Natural killer cell (primary cell): ENCODE measurements at regions of chr3 and their contacts with region 1.

Region 1: GRCh38 chr3:32947789-32948238 is 3.6 kb upstream of the CCR4 start:
- DNase-seq: peak; percentile 67 to 93
- ATAC-seq: peak; percentile 78 to 87 (median 82)
- H3K4me3 ChIP-seq: no peak overlapping the region
- H3K4me3 Mint-ChIP-seq: no peak overlapping the region
- H3K27ac ChIP-seq: no peak overlapping the region
- H3K27ac Mint-ChIP-seq: no peak overlapping the region
- H3K4me1 ChIP-seq: peaks cover 8% of the 10 kb centered on the region
- H3K4me1 Mint-ChIP-seq: no peaks in the 10 kb centered on the region
- H3K27me3 ChIP-seq: no peaks in the 10 kb centered on the region
- H3K27me3 Mint-ChIP-seq: no peaks in the 10 kb centered on the region
- CTCF ChIP-seq: peak; percentile 71

Region 2: GRCh38 chr3:33074217-33075067 is 126.6 kb after region 1 on chr3:
- intact Hi-C with region 1: loop called (anchors 1 kb)
- DNase-seq: peak in 1 of 2 donors; percentile 86
- ATAC-seq: peak; percentile 81 to 85 (median 81)
- H3K4me3 ChIP-seq: no peak overlapping the region
- H3K4me3 Mint-ChIP-seq: no peak overlapping the region
- H3K27ac ChIP-seq: no peak overlapping the region
- H3K27ac Mint-ChIP-seq: no peak overlapping the region
- H3K4me1 ChIP-seq: peaks cover 2% of the 10 kb centered on the region
- H3K4me1 Mint-ChIP-seq: peaks cover 8 to 24% of the 10 kb centered on the region in 2 donors
- H3K27me3 ChIP-seq: no peaks in the 10 kb centered on the region
- H3K27me3 Mint-ChIP-seq: no peaks in the 10 kb centered on the region
- CTCF ChIP-seq: peak; percentile 83

Region 3: DNA sequence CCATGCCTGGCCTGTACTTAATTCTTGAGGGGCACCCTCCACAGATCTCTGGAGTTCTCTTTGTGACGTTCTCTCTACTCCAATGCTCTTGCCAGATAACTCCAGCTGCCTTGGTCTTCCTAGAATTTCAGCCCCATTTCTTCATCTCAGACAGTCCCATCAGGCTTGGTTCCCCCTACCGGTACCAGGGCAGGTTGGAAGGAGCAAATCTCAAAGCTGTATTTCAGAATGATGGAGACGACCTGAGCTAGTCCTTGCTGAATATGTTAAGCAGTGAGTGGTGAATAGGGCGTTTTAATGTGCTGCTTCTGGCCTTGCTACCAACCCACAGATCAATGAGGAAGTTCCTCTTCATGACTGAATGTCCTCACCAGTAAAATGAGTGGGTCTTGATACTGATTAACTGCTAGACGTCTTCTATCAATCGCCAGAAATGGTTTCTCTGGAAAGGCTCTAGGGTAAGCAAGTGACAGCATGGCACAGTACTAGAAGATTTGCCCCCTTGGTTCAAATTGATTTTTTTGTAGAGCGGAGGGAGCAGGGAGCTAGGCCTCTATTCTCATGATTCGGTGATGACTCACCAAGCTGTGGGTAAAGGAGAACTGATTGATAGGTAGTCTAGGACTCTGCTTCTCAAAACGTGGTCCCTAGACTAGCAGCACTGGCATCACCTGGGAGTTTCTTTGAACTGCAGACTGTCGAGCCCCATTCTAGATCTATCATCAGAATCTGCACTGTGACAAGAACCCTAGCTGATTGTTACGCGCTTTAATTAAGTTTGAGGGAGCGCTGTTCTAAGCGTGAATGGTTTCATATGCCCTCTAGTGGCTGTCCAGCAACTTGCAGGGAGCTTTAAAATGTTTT is 424.6 kb after region 1 on chr3:
- intact Hi-C with region 1: loop called (anchors 1 kb)
- DNase-seq: peak in 1 of 2 donors; percentile 68
- ATAC-seq: peak; percentile 64 to 80 (median 70)
- H3K4me3 ChIP-seq: no peak overlapping the region
- H3K4me3 Mint-ChIP-seq: no peak overlapping the region
- H3K27ac ChIP-seq: no peak overlapping the region
- H3K27ac Mint-ChIP-seq: no peak overlapping the region
- H3K4me1 ChIP-seq: peaks cover 3% of the 10 kb centered on the region
- H3K4me1 Mint-ChIP-seq: peaks cover 9 to 11% of the 10 kb centered on the region in 2 donors
- H3K27me3 ChIP-seq: peaks cover 3% of the 10 kb centered on the region
- H3K27me3 Mint-ChIP-seq: peaks cover 7 to 16% of the 10 kb centered on the region in 2 donors
- CTCF ChIP-seq: peak; percentile 88

Region 4: GRCh38 chr3:33787328-33788009 is 839.7 kb after region 1 on chr3:
- intact Hi-C with region 1: loop called (anchors 2 kb)
- DNase-seq: peak; percentile 30 to 85
- ATAC-seq: peak; percentile 76 to 98 (median 97)
- H3K4me3 ChIP-seq: no peak overlapping the region
- H3K4me3 Mint-ChIP-seq: no peak overlapping the region
- H3K27ac ChIP-seq: no peak overlapping the region
- H3K27ac Mint-ChIP-seq: no peak overlapping the region
- H3K4me1 ChIP-seq: peaks cover 4% of the 10 kb centered on the region
- H3K4me1 Mint-ChIP-seq: peaks cover 0 to 8% of the 10 kb centered on the region in 2 donors
- H3K27me3 ChIP-seq: no peaks in the 10 kb centered on the region
- H3K27me3 Mint-ChIP-seq: peaks cover 10 to 11% of the 10 kb centered on the region in 2 donors
- CTCF ChIP-seq: peak; percentile 69